OCI-LY7 (cell line): ENCODE measurements at regions of chr2 and their contacts with region 1.

Region 1: DNA sequence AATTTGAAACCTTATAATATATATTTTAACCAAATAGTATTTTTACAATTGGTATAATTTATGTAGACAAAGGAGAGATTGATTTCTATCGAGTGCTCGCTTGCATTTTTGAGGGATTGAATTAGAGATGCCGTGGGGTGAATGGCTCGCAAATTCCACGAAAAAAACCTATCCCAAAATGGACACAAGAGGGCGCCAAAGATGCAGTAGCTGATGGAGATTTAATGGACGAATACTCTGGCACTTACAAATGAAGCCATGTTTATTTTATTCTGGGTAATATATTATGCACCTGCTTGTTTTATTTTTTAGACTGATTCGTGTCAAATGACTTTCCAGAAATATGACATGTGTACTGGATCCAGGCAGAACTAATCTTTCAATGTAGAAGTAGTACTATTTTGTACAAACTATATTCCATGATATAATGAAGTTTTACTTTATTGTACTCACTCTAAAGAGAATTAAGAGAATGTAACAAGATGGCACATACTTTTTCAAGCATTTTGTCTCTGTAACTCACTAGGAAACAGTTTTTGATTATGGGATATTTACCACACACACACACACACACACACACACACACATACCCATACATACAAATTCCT is 505.4 kb downstream of the PLCL1 start:
- DNase-seq: peak; percentile 72
- H3K4me3 ChIP-seq: no peak overlapping the region
- H3K27ac ChIP-seq: no peak overlapping the region
- H3K4me1 ChIP-seq: peaks cover 13% of the 10 kb centered on the region
- CTCF ChIP-seq: peak; percentile 96

Region 2: DNA sequence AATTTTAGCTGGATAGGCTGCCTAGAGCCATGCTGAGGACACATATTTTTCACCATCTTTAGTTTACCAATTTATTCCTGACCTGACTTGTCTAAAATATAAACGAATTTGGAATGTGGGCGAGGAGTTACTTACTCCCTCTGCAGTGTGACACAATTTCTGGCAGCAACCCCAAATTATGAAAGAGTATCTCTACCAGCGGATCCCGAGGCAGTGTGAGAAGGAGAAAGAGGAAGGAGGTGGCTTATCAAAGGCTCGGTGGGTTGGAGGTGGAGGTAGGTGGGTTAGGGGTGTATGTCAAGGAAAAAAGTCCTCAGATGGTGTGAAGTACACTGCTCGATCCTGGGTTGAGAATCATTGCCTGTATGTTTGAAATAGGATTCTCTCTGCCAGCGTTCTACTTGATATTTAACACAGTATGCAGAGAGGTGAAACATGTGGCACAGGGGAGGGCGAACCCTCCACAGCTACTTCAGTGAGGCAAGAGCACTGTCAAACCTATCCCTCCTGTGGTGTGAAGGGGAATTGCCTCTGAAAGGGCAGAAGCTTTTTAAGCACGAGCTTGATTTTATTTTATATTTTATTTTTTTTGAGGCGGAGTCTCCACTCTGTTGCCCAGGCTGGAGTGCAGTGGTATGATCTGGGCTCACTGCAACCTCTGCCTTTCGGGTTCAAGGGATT is 710.4 kb before region 1 on chr2:
- CTCF ChIA-PET with region 1: no interaction called
- POLR2A ChIA-PET with region 1: no interaction called
- intact Hi-C with region 1: no loop called
- DNase-seq: peak; percentile 63
- H3K4me3 ChIP-seq: no peak overlapping the region
- H3K27ac ChIP-seq: no peak overlapping the region
- H3K4me1 ChIP-seq: no peaks in the 10 kb centered on the region
- CTCF ChIP-seq: peak; percentile 48; the same call in 1 of the 2 replicates

Region 3: GRCh38 chr2:198571393-198571792 is 261.6 kb after region 1 on chr2:
- CTCF ChIA-PET with region 1: no interaction called
- POLR2A ChIA-PET with region 1: no interaction called
- intact Hi-C with region 1: no loop called
- DNase-seq: no peak
- H3K4me3 ChIP-seq: no peak overlapping the region
- H3K27ac ChIP-seq: no peak overlapping the region
- H3K4me1 ChIP-seq: no peaks in the 10 kb centered on the region
- CTCF ChIP-seq: no peak

Region 4: DNA sequence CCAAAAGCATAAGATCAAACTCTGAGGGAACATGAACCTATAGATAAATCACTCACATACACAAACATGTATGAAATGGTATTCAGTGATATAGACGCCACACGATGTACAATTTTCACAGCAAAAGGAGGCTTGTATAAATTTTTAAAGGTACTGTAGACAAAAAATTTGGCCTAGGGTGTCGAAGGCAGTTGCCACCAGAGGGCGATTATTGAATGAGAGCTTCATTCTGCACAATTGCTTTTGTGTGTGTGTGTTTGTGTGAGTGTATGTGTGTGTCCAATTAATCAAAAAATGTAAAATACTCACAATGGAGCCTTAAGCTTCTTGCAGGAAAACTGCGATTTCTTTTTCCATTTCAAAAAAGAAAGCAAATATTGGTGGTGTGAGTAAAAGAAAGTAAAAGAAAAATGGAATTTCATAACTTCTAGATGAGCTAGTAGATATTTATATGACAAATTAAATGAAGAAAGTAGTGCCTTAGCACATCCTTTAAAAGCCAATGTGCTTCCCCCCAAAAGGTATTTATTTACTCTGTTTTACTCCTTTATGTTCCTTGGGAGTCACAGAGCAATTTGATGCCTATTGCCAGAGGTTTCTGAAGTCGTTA is 347.8 kb after region 1 on chr2:
- CTCF ChIA-PET with region 1: no interaction called
- POLR2A ChIA-PET with region 1: no interaction called
- intact Hi-C with region 1: loop called (anchors 10 kb)
- DNase-seq: peak; percentile 82
- H3K4me3 ChIP-seq: no peak overlapping the region
- H3K27ac ChIP-seq: no peak overlapping the region
- H3K4me1 ChIP-seq: peaks cover 19% of the 10 kb centered on the region
- CTCF ChIP-seq: peak; percentile 97

Region 5: DNA sequence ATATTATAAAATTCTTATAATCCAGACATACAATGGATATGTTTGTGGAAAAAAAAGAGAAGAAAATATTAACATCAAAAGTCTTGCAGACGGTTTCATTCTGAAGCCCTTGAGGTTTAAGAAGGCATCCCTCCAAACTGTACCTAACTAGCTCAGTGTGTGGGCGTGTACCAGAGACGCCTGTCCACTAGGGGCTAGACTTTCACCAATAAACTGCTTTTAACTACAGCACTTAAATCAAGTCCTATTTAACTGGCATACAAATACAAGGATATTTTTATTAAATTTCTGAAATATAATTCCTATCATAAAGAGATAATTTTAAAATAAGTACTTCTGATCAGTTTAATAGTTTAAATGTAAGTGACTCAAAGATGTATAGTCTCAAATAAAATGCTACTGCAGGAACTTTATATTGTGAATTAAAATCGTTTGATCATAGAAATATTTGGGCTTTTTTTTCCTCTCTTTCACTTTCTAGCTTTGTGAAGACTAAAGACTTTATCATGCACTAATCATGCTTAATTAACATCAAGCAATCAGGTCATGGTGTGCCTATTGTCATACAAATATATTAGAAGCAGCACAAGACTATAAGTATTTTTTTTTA is 710.2 kb after region 1 on chr2:
- CTCF ChIA-PET with region 1: no interaction called
- POLR2A ChIA-PET with region 1: no interaction called
- intact Hi-C with region 1: loop called (anchors 10 kb)
- DNase-seq: peak; percentile 85
- H3K4me3 ChIP-seq: no peak overlapping the region
- H3K27ac ChIP-seq: no peak overlapping the region
- H3K4me1 ChIP-seq: peaks cover 29% of the 10 kb centered on the region
- CTCF ChIP-seq: peak; percentile 91

Region 6: GRCh38 chr2:199739413-199740110 is 1429.8 kb after region 1 on chr2:
- CTCF ChIA-PET with region 1: no interaction called
- POLR2A ChIA-PET with region 1: no interaction called
- intact Hi-C with region 1: loop called (anchors 2 kb)
- DNase-seq: peak; percentile 62
- H3K4me3 ChIP-seq: no peak overlapping the region
- H3K27ac ChIP-seq: no peak overlapping the region
- H3K4me1 ChIP-seq: no peaks in the 10 kb centered on the region
- CTCF ChIP-seq: peak; percentile 99